Activated T-helper 1 cell treated with anti-CD3 and anti-CD28 coated beads, Interleukin-12 subunit alpha, Interleukin-12 subunit beta, Interleukin-2, Interleukin-4 antibody, amounts not matched to agents 30 ng/mL and 10 ng/mL and 1 ng/mL, durations not matched to agents 14 hours and 24 hours and 36 hours (primary cell): ENCODE measurements at regions of chr14 and their contacts with region 1.

Region 1: DNA sequence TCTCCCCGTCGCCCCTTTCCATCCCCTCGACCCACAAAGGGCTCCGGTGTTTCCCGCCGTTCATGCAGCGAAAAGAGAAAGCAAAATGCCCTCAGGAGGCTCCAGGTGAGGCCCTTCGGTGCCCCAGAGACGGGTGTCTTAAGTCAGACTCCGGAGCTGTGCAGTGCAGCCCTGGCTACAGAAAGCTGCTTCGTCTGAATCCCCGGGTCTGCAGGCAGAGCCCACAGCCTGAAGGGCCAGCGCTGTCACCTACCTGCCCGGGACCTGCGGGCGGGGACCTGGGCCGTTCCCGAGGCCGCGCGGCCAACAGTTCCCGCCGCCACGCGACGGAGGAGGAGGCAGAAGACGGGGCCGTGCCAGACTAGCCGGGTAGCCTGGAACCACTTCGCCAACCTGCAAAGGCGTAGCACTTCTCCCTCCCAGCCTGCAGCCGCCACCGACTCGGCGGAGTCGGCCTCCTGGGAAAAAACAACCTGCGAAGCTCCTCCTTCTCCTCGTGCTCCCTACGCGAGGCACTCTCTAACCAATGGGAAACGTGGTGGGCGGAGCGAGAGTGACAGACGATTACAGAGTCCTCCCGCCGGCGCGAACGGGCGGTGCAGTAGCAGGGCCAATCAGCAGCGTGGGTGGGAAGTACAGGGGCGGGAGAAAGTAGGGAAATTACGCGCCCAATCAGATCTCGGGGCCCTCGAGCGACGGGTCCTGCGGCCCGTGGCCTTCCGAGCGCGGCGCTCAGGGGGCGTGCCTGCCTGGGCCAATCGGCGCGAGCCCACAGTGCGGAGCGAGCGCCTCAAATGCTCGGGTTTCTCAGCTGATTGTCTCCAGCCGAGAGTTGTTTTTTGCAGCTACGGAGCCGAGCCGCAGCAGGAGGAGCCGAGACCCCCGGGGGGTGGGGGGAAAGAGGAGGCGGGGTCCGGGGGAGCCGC is at the starts of genes GPR137C and TXNDC16:
- DNase-seq: peak; percentile 99
- H3K4me3 Mint-ChIP-seq: peak within 1 kb of the TSS; percentile 92
- H3K27ac Mint-ChIP-seq: peak within 1 kb of the TSS; percentile 91
- H3K4me1 Mint-ChIP-seq: peaks cover 40% of the 10 kb centered on the region
- H3K27me3 Mint-ChIP-seq: peaks cover 25% of the 10 kb centered on the region
- total RNA-seq, gene GPR137C: 0.10 and 0.34 TPM in 2 replicates
- total RNA-seq, gene TXNDC16: 4.0 and 4.8 TPM in 2 replicates

Region 2: GRCh38 chr14:51094901-51095853 is 1457.1 kb before region 1 on chr14 and contains the start of gene TRIM9:
- intact Hi-C with region 1: loop called (anchors 5 kb)
- DNase-seq: peak; percentile 84
- H3K4me3 Mint-ChIP-seq: peak within 1 kb of the TSS; percentile 88
- H3K27ac Mint-ChIP-seq: peak within 1 kb of the TSS; percentile 65
- H3K4me1 Mint-ChIP-seq: peaks cover 11% of the 10 kb centered on the region
- H3K27me3 Mint-ChIP-seq: peaks cover 51% of the 10 kb centered on the region
- total RNA-seq, gene TRIM9: 0.31 TPM in 1 of 2 replicates, not detected in the other

Region 3: DNA sequence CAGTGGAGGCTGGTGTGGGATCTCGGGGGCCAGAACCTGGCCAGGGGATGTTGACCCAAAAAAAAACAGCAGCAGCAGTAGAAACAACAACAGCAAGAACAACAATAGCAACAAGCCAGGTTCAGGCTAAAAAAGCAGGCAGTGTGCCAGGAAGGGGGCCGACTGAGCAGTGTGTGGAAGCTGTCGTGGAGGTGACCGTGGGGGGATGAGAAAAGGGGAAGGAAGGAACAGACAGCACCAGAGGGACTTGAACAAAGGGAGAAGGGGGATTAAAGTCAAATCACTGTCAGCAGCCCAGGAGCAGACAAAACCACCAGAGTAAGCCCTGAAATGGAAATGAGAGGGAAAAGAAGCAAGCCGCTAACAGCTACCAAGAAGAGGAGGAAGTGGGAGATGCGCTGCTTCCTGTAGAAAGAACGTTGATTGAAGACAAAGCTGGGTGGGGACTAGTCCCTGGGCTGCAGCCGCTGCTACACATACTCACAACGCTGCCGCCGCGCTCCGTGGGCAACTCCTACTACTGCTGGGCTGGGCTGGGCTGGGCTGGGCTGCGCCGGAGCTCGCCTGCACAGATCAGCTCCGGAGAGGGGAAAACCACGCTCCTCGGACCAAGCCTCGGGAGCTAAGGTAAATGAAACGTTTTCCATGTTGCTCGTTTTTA is 692.0 kb before region 1 on chr14 and contains the start of gene GNG2:
- intact Hi-C with region 1: loop called (anchors 2 kb)
- DNase-seq: peak; percentile 77
- H3K4me3 Mint-ChIP-seq: peak within 1 kb of the TSS; percentile 95
- H3K27ac Mint-ChIP-seq: peak within 1 kb of the TSS; percentile 88
- H3K4me1 Mint-ChIP-seq: peaks cover 63% of the 10 kb centered on the region
- H3K27me3 Mint-ChIP-seq: peaks cover 2% of the 10 kb centered on the region
- total RNA-seq, gene GNG2: 126 and 128 TPM in 2 replicates

Region 4: DNA sequence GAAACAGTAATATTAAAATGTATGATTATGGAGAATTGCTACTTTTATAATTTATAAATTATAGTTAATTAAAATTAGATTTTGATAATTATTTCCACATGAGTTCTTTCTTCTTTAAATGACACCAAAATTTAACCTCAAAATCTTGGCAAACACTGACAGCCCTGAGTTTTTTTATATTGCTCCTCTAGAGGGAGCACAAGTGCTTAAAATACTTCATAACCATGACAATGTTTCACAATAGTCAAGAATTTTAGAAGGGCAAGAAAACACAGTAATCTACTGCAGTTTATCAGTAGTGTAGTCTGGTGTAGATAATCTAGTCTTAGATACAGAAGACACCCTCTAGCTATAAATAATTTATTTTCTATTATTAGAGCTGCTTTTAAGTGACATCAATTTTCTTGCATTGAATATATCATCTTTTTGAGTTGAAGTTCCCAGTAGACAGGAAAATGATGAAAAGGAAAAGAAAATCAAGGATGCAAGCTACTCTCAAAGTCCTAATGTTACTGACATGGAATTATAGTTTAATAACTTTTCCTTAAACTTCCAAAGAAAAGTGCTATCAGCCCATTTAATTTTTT is 252.5 kb before region 1 on chr14:
- intact Hi-C with region 1: loop called (anchors 5 kb)
- DNase-seq: no peak
- H3K4me3 Mint-ChIP-seq: no peak overlapping the region
- H3K27ac Mint-ChIP-seq: no peak overlapping the region
- H3K4me1 Mint-ChIP-seq: peaks cover 47% of the 10 kb centered on the region
- H3K27me3 Mint-ChIP-seq: peaks cover 3% of the 10 kb centered on the region

Region 5: GRCh38 chr14:52473557-52473956 is 78.8 kb before region 1 on chr14:
- intact Hi-C with region 1: loop called (anchors 2 kb)
- DNase-seq: no peak
- H3K4me3 Mint-ChIP-seq: no peak overlapping the region
- H3K27ac Mint-ChIP-seq: no peak overlapping the region
- H3K4me1 Mint-ChIP-seq: peaks cover 26% of the 10 kb centered on the region
- H3K27me3 Mint-ChIP-seq: no peaks in the 10 kb centered on the region

Region 6: DNA sequence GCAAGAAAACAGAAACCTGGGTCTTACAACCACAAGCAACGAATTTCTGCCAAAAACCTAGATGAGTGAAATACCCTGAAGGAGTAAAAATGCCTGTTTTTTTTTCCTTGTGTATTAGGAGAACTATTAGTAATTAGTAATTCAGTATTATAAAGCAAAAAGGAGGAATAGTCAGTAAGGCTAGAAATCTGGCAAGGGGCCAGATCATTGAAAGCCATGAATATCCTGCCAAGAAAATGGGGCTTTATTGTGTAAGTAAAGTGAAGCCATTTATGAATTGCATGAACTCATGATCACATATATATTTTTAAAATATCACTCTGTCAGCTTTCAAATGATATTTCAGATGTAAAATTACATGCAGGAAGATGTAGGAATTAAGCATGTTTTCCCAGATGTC is 57.9 kb before region 1 on chr14:
- intact Hi-C with region 1: no loop called
- DNase-seq: no peak
- H3K4me3 Mint-ChIP-seq: no peak overlapping the region
- H3K27ac Mint-ChIP-seq: no peak overlapping the region
- H3K4me1 Mint-ChIP-seq: no peaks in the 10 kb centered on the region
- H3K27me3 Mint-ChIP-seq: no peaks in the 10 kb centered on the region

Region 7: GRCh38 chr14:52695481-52696091 is 143.3 kb after region 1 on chr14 and contains the start of gene ERO1A:
- intact Hi-C with region 1: loop called (anchors 2 kb)
- DNase-seq: peak; percentile 67
- H3K4me3 Mint-ChIP-seq: peak within 1 kb of the TSS; percentile 100
- H3K27ac Mint-ChIP-seq: peak within 1 kb of the TSS; percentile 99
- H3K4me1 Mint-ChIP-seq: peaks cover 42% of the 10 kb centered on the region
- H3K27me3 Mint-ChIP-seq: peaks cover 1% of the 10 kb centered on the region
- total RNA-seq, gene ERO1A: 144 and 158 TPM in 2 replicates

Region 8: GRCh38 chr14:52791203-52792096 is 239.1 kb after region 1 on chr14 and contains the start of gene GNPNAT1:
- intact Hi-C with region 1: loop called (anchors 1 kb)
- DNase-seq: peak; percentile 85
- H3K4me3 Mint-ChIP-seq: peak within 1 kb of the TSS; percentile 92
- H3K27ac Mint-ChIP-seq: peak within 1 kb of the TSS; percentile 86
- H3K4me1 Mint-ChIP-seq: peaks cover 32% of the 10 kb centered on the region
- H3K27me3 Mint-ChIP-seq: no peaks in the 10 kb centered on the region
- total RNA-seq, gene GNPNAT1: 26.0 and 26.4 TPM in 2 replicates